ENCODE measurements at regions of chr7 and their contacts with region 1.

Region 1: DNA sequence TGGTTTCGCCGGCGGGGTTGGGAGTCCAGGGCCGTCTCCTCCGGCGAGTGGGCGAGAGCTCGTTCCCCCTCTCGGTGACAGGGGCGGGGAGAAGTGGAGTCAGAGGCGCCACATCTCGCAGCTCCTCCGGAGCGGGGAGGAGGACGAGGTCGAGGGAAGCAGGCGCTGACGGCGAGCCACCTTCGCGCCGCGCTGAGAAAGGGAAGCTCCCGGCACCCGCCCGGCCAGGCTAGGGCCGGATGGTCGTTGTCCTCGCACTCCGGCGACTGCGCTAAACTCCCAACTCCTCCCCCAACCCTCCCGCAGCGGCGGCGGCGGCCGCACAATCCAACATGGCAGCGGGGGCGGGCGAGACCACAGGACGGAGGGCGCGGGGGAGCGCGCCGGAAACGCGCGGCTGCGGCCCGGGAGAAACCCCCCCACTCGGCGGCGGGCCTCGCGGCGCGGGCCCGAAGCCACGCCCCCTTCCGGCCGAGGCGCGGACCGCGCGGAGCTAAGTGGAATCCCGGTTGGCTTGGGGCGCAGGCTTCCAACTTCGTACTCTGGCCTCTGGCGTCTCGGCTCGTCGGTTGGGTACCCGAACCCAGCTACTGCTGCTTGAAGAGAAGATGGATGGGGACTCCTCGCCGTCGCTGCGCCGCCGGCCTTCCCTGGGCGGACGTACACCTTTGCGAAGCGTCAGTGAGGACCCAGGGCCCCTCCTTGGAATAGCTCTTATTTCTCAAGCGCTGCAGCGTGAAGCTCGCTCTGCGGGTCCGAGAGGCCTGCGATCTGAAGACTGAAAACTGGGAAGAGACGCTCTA is at the start of gene WASL:
- DNase-seq: peak; percentile 95
- H3K4me3 Mint-ChIP-seq: peak within 1 kb of the TSS; percentile 91
- H3K27ac Mint-ChIP-seq: peak within 1 kb of the TSS; percentile 75
- H3K4me1 Mint-ChIP-seq: peaks cover 45% of the 10 kb centered on the region
- H3K27me3 Mint-ChIP-seq: no peaks in the 10 kb centered on the region
- CTCF ChIP-seq: no peak
- total RNA-seq, gene WASL: 33.2 and 37.5 TPM in 2 replicates

Region 2: DNA sequence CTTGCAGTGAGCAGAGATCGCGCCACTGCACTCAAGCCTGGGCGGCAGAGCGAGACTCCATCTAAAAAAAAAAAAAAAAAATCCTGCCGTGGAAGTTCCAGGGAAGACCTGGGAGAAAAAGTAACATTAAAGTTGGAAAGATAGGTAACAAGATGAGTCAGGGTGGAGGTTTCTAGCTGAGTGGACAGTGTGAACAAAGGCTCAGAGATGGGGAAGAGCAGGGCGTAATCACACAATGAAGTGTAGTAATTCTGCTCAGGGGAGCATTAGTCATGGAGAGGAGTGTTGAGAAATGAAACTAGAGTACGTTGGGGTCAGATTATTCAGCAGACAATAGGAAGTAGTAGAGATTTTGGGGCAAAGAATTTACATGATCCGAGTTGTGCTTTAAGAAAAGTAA is 21.4 kb after region 1 on chr7:
- CTCF ChIA-PET with region 1: interaction called, 16 read pairs
- intact Hi-C with region 1: loop called (anchors 2 kb)
- DNase-seq: peak; percentile 24
- H3K4me3 Mint-ChIP-seq: no peak overlapping the region
- H3K27ac Mint-ChIP-seq: peak overlapping the region; percentile 45
- H3K4me1 Mint-ChIP-seq: peaks cover 58% of the 10 kb centered on the region
- H3K27me3 Mint-ChIP-seq: no peaks in the 10 kb centered on the region
- CTCF ChIP-seq: no peak

Region 3: GRCh38 chr7:123784263-123784662 is 35.3 kb after region 1 on chr7:
- CTCF ChIA-PET with region 1: no interaction called
- intact Hi-C with region 1: loop called (anchors 1 kb)
- DNase-seq: no peak
- H3K4me3 Mint-ChIP-seq: no peak overlapping the region
- H3K27ac Mint-ChIP-seq: peak overlapping the region; percentile 27
- H3K4me1 Mint-ChIP-seq: peaks cover 50% of the 10 kb centered on the region
- H3K27me3 Mint-ChIP-seq: no peaks in the 10 kb centered on the region
- CTCF ChIP-seq: no peak

Measured in Calu3 (cell line).